K562 (cell line): ENCODE measurements at regions of chr15 and their contacts with region 1.

Region 1: GRCh38 chr15:55637086-55637485 is 48.9 kb upstream of the PYGO1 start:
- DNase-seq: no peak
- ATAC-seq: no peak
- H3K4me3 ChIP-seq: no peak overlapping the region
- H3K27ac ChIP-seq: no peak overlapping the region
- H3K4me1 ChIP-seq: no peaks in the 10 kb centered on the region
- H3K27me3 ChIP-seq: no peaks in the 10 kb centered on the region; a peak in 2 of 5 replicates
- CTCF ChIP-seq: no peak
- EP300 ChIP-seq: no peak
- POLR2A ChIP-seq: no peak
- RAD21 ChIP-seq: no peak

Region 2: GRCh38 chr15:55526559-55527036 is 110.5 kb before region 1 on chr15:
- CTCF ChIA-PET with region 1: no interaction called
- POLR2A ChIA-PET with region 1: no interaction called
- in situ Hi-C with region 1: no loop called
- intact Hi-C with region 1: loop called (anchors 1 kb)
- DNase-seq: peak; percentile 46 to 61 (median 48)
- ATAC-seq: peak; percentile 89
- H3K4me3 ChIP-seq: no peak overlapping the region
- H3K27ac ChIP-seq: no peak overlapping the region
- H3K4me1 ChIP-seq: no peaks in the 10 kb centered on the region; a peak in 2 of 5 replicates
- H3K27me3 ChIP-seq: no peaks in the 10 kb centered on the region
- CTCF ChIP-seq: peak; percentile 61 to 66 (median 66)
- EP300 ChIP-seq: no peak
- POLR2A ChIP-seq: no peak
- RAD21 ChIP-seq: peak in 1 of 2 experiments; percentile 47; a peak in 2 of 4 replicates

Region 3: GRCh38 chr15:55599439-55599838 is 37.6 kb before region 1 on chr15:
- CTCF ChIA-PET with region 1: no interaction called
- POLR2A ChIA-PET with region 1: no interaction called
- in situ Hi-C with region 1: no loop called
- intact Hi-C with region 1: no loop called
- DNase-seq: no peak
- ATAC-seq: no peak
- H3K4me3 ChIP-seq: no peak overlapping the region
- H3K27ac ChIP-seq: no peak overlapping the region
- H3K4me1 ChIP-seq: no peaks in the 10 kb centered on the region
- H3K27me3 ChIP-seq: no peaks in the 10 kb centered on the region; a peak in 2 of 5 replicates
- CTCF ChIP-seq: no peak
- EP300 ChIP-seq: no peak
- POLR2A ChIP-seq: no peak
- RAD21 ChIP-seq: no peak